ENCODE measurements at regions of chr11 and their contacts with region 1.

Region 1: DNA sequence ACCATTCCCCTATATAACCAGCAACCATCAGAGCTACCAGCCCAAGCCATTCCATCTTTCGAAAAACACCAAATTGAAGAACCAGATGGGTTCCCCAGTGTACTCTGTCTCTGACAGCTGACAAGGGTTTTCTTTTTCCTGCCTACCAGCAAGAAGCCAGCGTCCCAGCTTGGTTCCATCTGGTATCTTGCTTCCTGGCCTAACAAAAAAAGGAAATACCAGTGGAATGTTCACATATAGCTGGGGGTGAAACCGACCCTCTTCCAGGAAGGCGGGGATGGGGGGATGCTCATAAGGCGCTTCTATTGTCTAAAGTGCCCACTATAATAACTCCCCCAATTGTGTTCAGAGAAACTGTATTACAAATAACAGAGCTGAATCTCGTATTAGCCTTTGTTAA is 172.3 kb downstream of the LDLRAD3 start:
- DNase-seq: peak; percentile 88
- H3K4me3 ChIP-seq: no peak overlapping the region
- H3K27ac ChIP-seq: peak overlapping the region; percentile 76
- H3K4me1 ChIP-seq: peaks cover 26% of the 10 kb centered on the region
- H3K27me3 ChIP-seq: no peaks in the 10 kb centered on the region
- CTCF ChIP-seq: no peak
- POLR2A ChIP-seq: no peak

Region 2: GRCh38 chr11:36149538-36150242 is 33.5 kb after region 1 on chr11:
- CTCF ChIA-PET with region 1: interaction called, 5 read pairs
- POLR2A ChIA-PET with region 1: no interaction called
- dilution Hi-C with region 1: no loop called
- intact Hi-C with region 1: loop called (anchors 1 kb)
- DNase-seq: peak; percentile 99
- H3K4me3 ChIP-seq: no peak overlapping the region
- H3K27ac ChIP-seq: peak overlapping the region; percentile 93
- H3K4me1 ChIP-seq: peaks cover 25% of the 10 kb centered on the region
- H3K27me3 ChIP-seq: no peaks in the 10 kb centered on the region
- CTCF ChIP-seq: peak; percentile 43 to 50
- POLR2A ChIP-seq: peak; percentile 64